PC-9 (cell line): ENCODE measurements at regions of chr4 and their contacts with region 1.

Region 1: GRCh38 chr4:39181905-39182638 is at the start of gene WDR19:
- DNase-seq: peak; percentile 97 to 99
- H3K4me3 ChIP-seq: peak within 1 kb of the TSS; percentile 74
- H3K27ac ChIP-seq: peak within 1 kb of the TSS; percentile 36; the same call in 1 of the 2 replicates
- H3K4me1 ChIP-seq: peaks cover 15% of the 10 kb centered on the region
- H3K27me3 ChIP-seq: no peaks in the 10 kb centered on the region
- CTCF ChIP-seq: peak; percentile 62; the same call in 1 of the 2 replicates
- total RNA-seq, gene WDR19: 26.1 and 33.2 TPM in 2 replicates

Region 2: GRCh38 chr4:38669208-38669607 is 512.9 kb before region 1 on chr4:
- CTCF ChIA-PET with region 1: interaction called, 18 read pairs
- POLR2A ChIA-PET with region 1: no interaction called
- intact Hi-C with region 1: no loop called
- DNase-seq: no peak
- H3K4me3 ChIP-seq: peak overlapping the region; percentile 72; the same call in 1 of the 2 replicates
- H3K27ac ChIP-seq: peak overlapping the region; percentile 96
- H3K4me1 ChIP-seq: peaks cover 75% of the 10 kb centered on the region
- H3K27me3 ChIP-seq: no peaks in the 10 kb centered on the region
- CTCF ChIP-seq: no peak

Region 3: GRCh38 chr4:38752941-38753806 is 428.9 kb before region 1 on chr4:
- CTCF ChIA-PET with region 1: no interaction called
- POLR2A ChIA-PET with region 1: no interaction called
- intact Hi-C with region 1: loop called (anchors 2 kb)
- DNase-seq: peak; percentile 89 to 91
- H3K4me3 ChIP-seq: no peak overlapping the region
- H3K27ac ChIP-seq: peak overlapping the region; percentile 71
- H3K4me1 ChIP-seq: peaks cover 32% of the 10 kb centered on the region
- H3K27me3 ChIP-seq: no peaks in the 10 kb centered on the region
- CTCF ChIP-seq: no peak

Region 4: GRCh38 chr4:39004758-39005157 is 177.3 kb before region 1 on chr4:
- CTCF ChIA-PET with region 1: no interaction called
- POLR2A ChIA-PET with region 1: no interaction called
- intact Hi-C with region 1: no loop called
- DNase-seq: no peak
- H3K4me3 ChIP-seq: no peak overlapping the region
- H3K27ac ChIP-seq: no peak overlapping the region
- H3K4me1 ChIP-seq: no peaks in the 10 kb centered on the region
- H3K27me3 ChIP-seq: no peaks in the 10 kb centered on the region
- CTCF ChIP-seq: no peak

Region 5: DNA sequence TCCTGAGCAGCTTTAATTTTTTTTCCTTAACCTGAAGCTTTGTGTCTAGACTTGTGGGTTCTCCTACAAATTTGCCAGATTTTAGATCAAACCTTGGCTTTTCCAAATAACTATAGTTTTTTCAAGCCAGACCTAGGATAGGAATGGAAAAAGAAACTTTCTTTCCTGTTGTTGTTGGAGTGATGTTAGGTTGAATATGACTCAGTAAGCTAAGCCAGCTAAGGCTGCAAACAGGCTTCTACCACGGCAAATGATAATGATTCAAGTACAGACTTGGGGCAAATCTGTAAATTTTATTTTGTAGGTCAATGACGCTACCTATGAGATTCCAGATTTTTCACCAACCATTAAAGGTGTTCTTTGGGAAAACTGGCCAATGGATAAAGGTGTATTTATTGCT is 45.8 kb after region 1 on chr4:
- CTCF ChIA-PET with region 1: no interaction called
- POLR2A ChIA-PET with region 1: interaction called, 15 read pairs
- intact Hi-C with region 1: no loop called
- DNase-seq: no peak
- H3K4me3 ChIP-seq: no peak overlapping the region
- H3K27ac ChIP-seq: no peak overlapping the region
- H3K4me1 ChIP-seq: no peaks in the 10 kb centered on the region
- H3K27me3 ChIP-seq: no peaks in the 10 kb centered on the region
- CTCF ChIP-seq: no peak